ENCODE measurements at regions of chr2 and their contacts with region 1.

Region 1: GRCh38 chr2:219119422-219120043 is 41.1 kb downstream of the NHEJ1 start:
- DNase-seq: peak; percentile 71
- H3K4me3 Mint-ChIP-seq: no peak overlapping the region
- H3K27ac Mint-ChIP-seq: no peak overlapping the region
- H3K4me1 Mint-ChIP-seq: peaks cover 7% of the 10 kb centered on the region
- H3K27me3 Mint-ChIP-seq: no peaks in the 10 kb centered on the region

Region 2: GRCh38 chr2:219010162-219010756 is 109.3 kb before region 1 on chr2:
- CTCF ChIA-PET with region 1: interaction called, 10 read pairs
- DNase-seq: peak; percentile 42
- H3K4me3 Mint-ChIP-seq: no peak overlapping the region
- H3K27ac Mint-ChIP-seq: no peak overlapping the region
- H3K4me1 Mint-ChIP-seq: no peaks in the 10 kb centered on the region
- H3K27me3 Mint-ChIP-seq: peaks cover 81% of the 10 kb centered on the region

Region 3: DNA sequence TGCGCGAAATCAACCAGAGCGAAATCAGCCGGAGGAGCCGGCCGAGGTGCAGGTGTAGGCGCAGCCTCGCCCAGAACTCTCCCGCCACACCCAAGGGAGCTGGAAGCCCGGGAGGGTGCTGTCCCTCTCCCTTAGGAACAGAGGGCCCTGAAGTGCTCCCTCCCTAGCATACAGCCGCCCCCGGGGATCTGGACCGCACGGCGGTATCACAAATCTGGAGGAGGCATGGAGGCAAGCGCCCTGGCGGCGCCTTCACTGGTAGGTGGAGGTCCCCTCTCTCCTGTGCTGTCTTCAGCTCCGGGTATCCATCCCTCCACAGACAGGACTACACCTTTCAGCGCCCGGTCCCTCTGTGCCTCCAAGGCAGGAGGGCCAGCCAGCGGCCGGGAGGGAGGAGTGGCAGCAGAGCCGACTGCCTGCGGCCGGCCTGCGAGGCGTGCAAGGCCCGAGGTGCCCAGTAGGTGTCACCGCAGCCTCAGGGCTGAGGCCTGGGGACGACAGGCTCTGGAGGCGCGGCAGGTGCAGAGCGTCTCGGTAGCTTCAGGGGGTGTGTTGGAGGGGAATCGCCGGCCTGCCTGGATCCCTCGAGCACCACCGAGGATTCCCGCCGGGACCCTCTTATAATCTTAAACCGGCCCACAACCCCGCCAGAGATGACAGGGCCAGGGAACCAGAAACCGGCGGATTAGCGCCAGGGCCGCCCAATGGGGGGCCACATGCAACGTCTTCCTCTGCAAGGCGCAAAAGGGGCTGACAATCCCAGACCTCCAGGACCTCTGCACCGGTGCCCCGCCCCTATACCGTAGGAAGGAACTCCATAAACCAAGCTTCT is 61.6 kb before region 1 on chr2:
- CTCF ChIA-PET with region 1: interaction called, 90 read pairs
- DNase-seq: peak; percentile 81
- H3K4me3 Mint-ChIP-seq: no peak overlapping the region
- H3K27ac Mint-ChIP-seq: peak overlapping the region; percentile 24
- H3K4me1 Mint-ChIP-seq: peaks cover 22% of the 10 kb centered on the region
- H3K27me3 Mint-ChIP-seq: peaks cover 98% of the 10 kb centered on the region

Region 4: DNA sequence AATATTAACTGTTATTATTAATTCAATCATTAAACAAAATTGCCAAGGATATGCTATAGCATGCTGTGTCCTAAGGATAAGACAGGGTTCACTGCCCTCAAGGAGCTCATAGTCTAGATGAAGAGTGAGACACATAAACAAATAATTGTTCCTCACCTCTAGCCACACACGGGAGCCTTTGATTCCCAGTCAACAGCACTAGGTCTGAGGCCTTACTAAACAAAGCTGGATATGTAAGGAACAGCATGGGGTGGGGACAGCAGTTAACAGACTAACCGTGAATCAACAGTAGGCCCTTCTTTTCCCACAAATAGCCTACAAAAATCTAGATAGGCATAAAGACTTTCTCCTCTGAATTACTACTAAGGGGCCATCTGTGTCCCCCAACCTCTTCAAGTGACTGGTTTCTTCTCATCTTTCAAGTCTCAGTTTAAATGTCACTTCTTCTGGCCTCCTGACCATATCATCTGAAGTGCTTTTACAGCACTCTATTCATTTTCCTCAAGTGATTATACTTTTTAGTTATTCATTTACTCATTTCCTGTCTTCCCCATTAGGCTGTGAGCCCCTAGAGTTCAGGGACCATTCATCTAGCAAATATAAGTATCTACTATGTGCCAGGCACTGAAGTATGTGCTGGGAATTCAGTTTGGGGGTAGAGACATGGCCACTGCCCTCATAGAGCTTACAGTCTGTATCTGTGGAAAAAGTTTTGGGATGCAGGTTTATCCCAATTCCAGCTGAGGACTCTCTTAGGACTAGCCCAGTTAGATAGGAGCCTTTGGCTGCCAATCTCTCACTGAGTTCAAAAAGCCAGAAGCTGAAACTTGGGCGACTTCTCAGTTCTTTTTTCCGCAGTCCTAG is 28.9 kb before region 1 on chr2:
- CTCF ChIA-PET with region 1: interaction called, 12 read pairs
- DNase-seq: no peak
- H3K4me3 Mint-ChIP-seq: no peak overlapping the region
- H3K27ac Mint-ChIP-seq: no peak overlapping the region
- H3K4me1 Mint-ChIP-seq: no peaks in the 10 kb centered on the region
- H3K27me3 Mint-ChIP-seq: no peaks in the 10 kb centered on the region

Region 5: DNA sequence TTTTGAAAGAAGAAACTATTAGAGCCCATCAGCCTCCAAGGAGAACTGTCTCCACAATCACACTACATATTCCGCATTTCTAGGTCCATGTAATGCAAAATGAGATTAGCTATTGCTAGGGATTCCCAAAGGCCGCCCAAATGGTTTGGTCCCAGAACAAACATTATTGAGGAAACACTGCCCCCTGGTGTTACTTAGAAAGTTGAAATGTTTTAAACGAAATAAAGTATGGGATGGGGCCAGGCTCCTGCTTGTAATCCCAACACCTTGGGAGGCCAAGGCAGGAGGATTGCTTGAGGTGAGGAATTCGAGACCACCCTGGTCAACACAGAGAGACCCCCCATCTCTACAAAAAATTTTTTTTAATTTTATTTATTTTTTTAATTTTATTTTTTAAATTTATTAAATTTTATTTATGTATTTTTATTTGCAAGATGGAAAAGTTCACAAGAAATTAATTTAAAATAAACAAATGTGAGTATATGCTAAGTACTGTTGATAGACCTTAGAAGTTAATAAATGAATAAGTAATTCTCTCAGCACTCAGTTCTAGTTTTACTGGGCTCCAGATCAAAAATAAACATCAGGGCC is 35.6 kb after region 1 on chr2:
- CTCF ChIA-PET with region 1: interaction called, 10 read pairs
- DNase-seq: peak; percentile 41
- H3K4me3 Mint-ChIP-seq: no peak overlapping the region
- H3K27ac Mint-ChIP-seq: no peak overlapping the region
- H3K4me1 Mint-ChIP-seq: peaks cover 15% of the 10 kb centered on the region
- H3K27me3 Mint-ChIP-seq: no peaks in the 10 kb centered on the region

Region 6: GRCh38 chr2:219229305-219230058 is 109.9 kb after region 1 on chr2 and contains the starts of genes ANKZF1 and ATG9A:
- CTCF ChIA-PET with region 1: no interaction called
- DNase-seq: peak; percentile 100
- H3K4me3 Mint-ChIP-seq: peak within 1 kb of the TSS; percentile 95
- H3K27ac Mint-ChIP-seq: peak within 1 kb of the TSS; percentile 100
- H3K4me1 Mint-ChIP-seq: peaks cover 54% of the 10 kb centered on the region
- H3K27me3 Mint-ChIP-seq: no peaks in the 10 kb centered on the region